ENCODE measurements at regions of chr3 and their contacts with region 1.

Region 1: GRCh38 chr3:46866720-46867549 is 3.7 kb upstream of the MYL3 start:
- DNase-seq: peak; percentile 87
- H3K4me3 Mint-ChIP-seq: no peak overlapping the region
- H3K27ac Mint-ChIP-seq: no peak overlapping the region
- H3K4me1 Mint-ChIP-seq: no peaks in the 10 kb centered on the region
- H3K27me3 Mint-ChIP-seq: peaks cover 39% of the 10 kb centered on the region

Region 2: DNA sequence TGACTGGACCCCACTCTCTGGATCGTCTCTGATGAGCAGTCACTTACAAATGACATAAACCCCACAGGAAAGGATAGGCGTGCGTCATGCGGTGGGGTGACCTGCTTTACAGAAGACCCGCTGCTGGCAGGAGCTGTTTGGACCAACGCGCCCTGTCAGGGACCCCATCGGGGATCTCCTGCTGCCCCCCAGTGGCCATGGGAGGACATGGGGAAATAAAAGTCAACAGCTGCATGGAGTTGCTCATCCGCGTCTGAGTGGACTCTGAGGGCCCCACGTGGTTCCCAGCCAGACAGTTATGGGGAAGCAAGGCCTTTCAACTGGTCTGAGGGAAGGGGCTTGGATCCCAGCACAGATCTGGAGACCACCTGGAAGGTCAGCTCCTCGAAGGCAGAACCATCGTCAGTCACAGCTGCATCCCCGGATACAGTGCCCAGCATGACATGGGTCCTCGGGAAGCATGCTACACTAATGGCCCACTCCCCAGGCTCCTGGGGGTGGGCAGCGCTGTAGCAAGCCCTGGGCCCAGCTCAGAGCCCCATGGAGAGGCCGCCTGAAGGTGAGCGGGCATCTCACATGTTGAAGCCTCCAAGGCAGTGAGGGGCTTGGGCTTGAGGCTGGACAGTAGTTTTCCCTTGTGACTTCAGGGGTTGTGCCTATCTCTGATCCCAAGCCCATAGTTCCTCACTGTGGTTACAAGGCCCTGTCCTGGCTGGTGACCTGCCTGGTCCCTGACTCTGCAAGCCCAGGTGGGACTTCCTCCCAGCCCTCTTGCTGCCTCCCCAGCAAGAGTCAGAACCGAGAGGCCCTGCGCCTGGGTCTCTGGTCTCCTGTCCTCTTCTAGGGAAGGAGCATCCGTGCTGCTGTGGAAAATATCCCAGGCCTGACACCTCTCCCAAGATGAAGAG is 42.9 kb after region 1 on chr3:
- CTCF ChIA-PET with region 1: interaction called, 11 read pairs
- DNase-seq: peak; percentile 86
- H3K4me3 Mint-ChIP-seq: no peak overlapping the region
- H3K27ac Mint-ChIP-seq: peak overlapping the region; percentile 26
- H3K4me1 Mint-ChIP-seq: peaks cover 14% of the 10 kb centered on the region
- H3K27me3 Mint-ChIP-seq: peaks cover 5% of the 10 kb centered on the region

Region 3: GRCh38 chr3:47089630-47090029 is 222.7 kb after region 1 on chr3:
- CTCF ChIA-PET with region 1: no interaction called
- DNase-seq: no peak
- H3K4me3 Mint-ChIP-seq: no peak overlapping the region
- H3K27ac Mint-ChIP-seq: no peak overlapping the region
- H3K4me1 Mint-ChIP-seq: peaks cover 2% of the 10 kb centered on the region
- H3K27me3 Mint-ChIP-seq: no peaks in the 10 kb centered on the region

Measured in activated naive CD4-positive, alpha-beta T cell treated with anti-CD3 and anti-CD28 coated beads, Interleukin-2, amount 10 ng/mL, durations not matched to agents 7 days and 5 days (primary cell).